B cell (primary cell): ENCODE measurements at regions of chr14 and their contacts with region 1.

Region 1: GRCh38 chr14:106738075-106738474 is 1211.7 kb downstream of the TMEM121 start:
- DNase-seq: no peak
- ATAC-seq: no peak
- H3K4me3 ChIP-seq: no peak overlapping the region
- H3K4me3 Mint-ChIP-seq: no peak overlapping the region
- H3K27ac ChIP-seq: no peak overlapping the region
- H3K27ac Mint-ChIP-seq: no peak overlapping the region
- H3K4me1 ChIP-seq: peaks cover 20 to 26% of the 10 kb centered on the region in 2 donors
- H3K4me1 Mint-ChIP-seq: no peaks in the 10 kb centered on the region
- H3K27me3 ChIP-seq: no peaks in the 10 kb centered on the region
- H3K27me3 Mint-ChIP-seq: no peaks in the 10 kb centered on the region
- CTCF ChIP-seq: no peak

Region 2: GRCh38 chr14:106327234-106327633 is 410.8 kb before region 1 on chr14:
- CTCF ChIA-PET with region 1: no interaction called
- POLR2A ChIA-PET with region 1: no interaction called
- intact Hi-C with region 1: no loop called
- DNase-seq: no peak
- ATAC-seq: no peak
- H3K4me3 ChIP-seq: no peak overlapping the region
- H3K4me3 Mint-ChIP-seq: no peak overlapping the region
- H3K27ac ChIP-seq: no peak overlapping the region
- H3K27ac Mint-ChIP-seq: no peak overlapping the region
- H3K4me1 ChIP-seq: no peaks in the 10 kb centered on the region
- H3K4me1 Mint-ChIP-seq: peaks cover 6% of the 10 kb centered on the region
- H3K27me3 ChIP-seq: no peaks in the 10 kb centered on the region
- H3K27me3 Mint-ChIP-seq: peaks cover 5% of the 10 kb centered on the region
- CTCF ChIP-seq: no peak

Region 3: DNA sequence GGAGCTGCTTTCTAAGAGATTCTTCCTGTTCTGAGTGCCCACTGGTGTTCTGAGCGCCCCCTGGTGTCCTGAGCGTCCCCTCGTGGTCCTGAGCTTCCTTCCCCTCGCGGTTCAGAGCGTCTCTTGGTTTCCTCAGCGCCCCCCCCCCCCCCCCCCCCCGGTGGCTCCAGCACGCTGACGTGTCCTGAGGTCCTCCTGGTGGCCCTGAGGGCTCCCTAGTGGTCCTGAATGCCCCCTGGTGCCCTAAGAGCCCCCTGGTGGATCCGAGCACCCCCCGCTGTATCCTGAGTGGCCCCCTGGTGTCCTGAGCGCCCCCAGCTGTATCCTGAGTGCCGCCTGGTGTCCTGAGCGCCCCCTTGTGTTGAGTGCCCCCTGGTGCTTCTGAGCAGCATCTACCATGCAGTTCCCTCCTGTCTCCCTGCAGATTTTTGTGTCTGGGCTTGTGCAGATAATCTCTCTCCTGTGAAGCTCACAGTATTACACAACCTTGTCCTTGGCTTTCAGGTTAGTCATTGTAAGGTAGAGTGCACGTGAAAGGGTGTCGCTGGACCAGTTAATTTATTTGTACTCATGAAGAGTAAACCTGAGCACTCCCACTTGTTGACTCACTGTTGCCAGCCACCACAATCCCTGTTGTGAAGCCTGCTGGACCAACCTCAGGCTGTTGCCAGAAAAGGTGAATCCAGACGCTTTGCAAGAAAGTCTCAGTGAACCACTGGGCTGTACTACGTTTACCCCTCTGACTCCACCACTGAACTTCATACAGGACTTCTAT is 43.3 kb before region 1 on chr14:
- CTCF ChIA-PET with region 1: interaction called, 10 read pairs
- POLR2A ChIA-PET with region 1: no interaction called
- intact Hi-C with region 1: no loop called
- DNase-seq: peak; percentile 90
- ATAC-seq: peak; percentile 38
- H3K4me3 ChIP-seq: peak overlapping the region in 2 of 5 experiments; percentile 30 to 43
- H3K4me3 Mint-ChIP-seq: peak overlapping the region; percentile 47
- H3K27ac ChIP-seq: peak overlapping the region in 1 of 2 donors; percentile 15
- H3K27ac Mint-ChIP-seq: peak overlapping the region; percentile 11
- H3K4me1 ChIP-seq: peaks cover 13 to 22% of the 10 kb centered on the region in 2 donors
- H3K4me1 Mint-ChIP-seq: peaks cover 28% of the 10 kb centered on the region
- H3K27me3 ChIP-seq: no peaks in the 10 kb centered on the region
- H3K27me3 Mint-ChIP-seq: no peaks in the 10 kb centered on the region
- CTCF ChIP-seq: peak; percentile 72